ENCODE measurements at regions of chr14 and their contacts with region 1.

Region 1: DNA sequence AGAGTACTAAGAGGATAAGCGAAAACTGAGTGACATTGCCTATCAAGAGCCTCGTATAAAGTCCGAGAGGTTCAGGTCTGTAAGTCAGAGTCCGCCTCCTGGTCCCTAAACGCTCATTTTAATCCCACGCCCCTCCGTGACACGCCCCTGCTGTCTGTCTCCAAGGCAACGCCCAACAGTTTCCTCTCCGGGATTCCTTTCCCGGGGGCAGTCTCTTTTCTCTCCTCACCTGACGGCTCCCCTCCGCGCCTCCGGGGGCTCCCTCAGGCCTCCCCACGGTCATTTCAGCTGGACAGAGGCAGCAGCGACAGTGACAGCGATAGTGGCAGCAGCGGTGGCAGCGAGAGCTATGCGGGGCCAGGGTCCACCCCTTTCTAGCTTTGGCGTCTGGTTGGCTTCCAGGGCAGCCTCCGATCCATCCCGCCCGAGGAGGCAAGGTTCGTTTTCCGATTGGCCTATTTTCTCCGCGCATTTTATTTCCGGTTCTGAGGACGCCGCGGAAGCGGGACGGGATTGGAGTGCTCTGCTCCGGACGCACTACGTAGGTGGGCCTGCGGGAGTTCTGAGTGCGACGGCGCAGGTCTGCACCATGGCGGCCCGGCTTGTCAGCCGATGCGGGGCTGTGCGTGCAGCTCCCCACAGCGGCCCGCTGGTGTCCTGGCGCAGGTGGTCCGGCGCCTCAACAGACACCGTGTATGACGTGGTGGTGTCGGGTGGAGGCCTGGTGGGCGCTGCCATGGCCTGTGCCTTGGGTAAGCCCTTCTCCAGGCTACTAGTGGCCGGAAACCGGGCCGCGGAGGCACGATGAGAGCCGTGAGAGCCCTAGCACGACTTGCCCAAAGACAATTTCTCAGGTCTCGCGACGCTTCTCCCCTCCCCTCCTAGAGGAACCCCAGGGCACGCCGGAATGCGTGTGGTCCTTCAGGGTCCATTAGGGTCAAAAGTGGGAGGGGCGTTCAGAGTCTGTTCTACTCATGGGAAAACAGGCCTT is at the starts of genes COQ6 and FAM161B:
- DNase-seq: peak; percentile 98
- H3K4me3 ChIP-seq: peak within 1 kb of the TSS; percentile 55 to 70 (median 64)
- H3K27ac ChIP-seq: peak within 1 kb of the TSS; percentile 46
- H3K4me1 ChIP-seq: peaks cover 5% of the 10 kb centered on the region
- H3K27me3 ChIP-seq: no peaks in the 10 kb centered on the region
- CTCF ChIP-seq: peak in 1 of 2 donors; percentile 7
- POLR2A ChIP-seq: peak; percentile 73
- total RNA-seq, gene COQ6: 20.3 and 20.7 TPM in 2 replicates
- total RNA-seq, gene FAM161B: 3.1 and 3.3 TPM in 2 replicates

Region 2: GRCh38 chr14:73886449-73887317 is 63.4 kb before region 1 on chr14 and contains the start of gene ZNF410:
- CTCF ChIA-PET with region 1: no interaction called
- POLR2A ChIA-PET with region 1: interaction called, 3 read pairs
- dilution Hi-C with region 1: no loop called
- intact Hi-C with region 1: loop called (anchors 1 kb)
- DNase-seq: peak; percentile 93
- H3K4me3 ChIP-seq: peak within 1 kb of the TSS; percentile 60 to 87 (median 73)
- H3K27ac ChIP-seq: peak within 1 kb of the TSS; percentile 90
- H3K4me1 ChIP-seq: peaks cover 18% of the 10 kb centered on the region
- H3K27me3 ChIP-seq: no peaks in the 10 kb centered on the region
- CTCF ChIP-seq: no peak
- POLR2A ChIP-seq: peak; percentile 45
- total RNA-seq, gene ZNF410: 39.2 and 45.0 TPM in 2 replicates

Region 3: DNA sequence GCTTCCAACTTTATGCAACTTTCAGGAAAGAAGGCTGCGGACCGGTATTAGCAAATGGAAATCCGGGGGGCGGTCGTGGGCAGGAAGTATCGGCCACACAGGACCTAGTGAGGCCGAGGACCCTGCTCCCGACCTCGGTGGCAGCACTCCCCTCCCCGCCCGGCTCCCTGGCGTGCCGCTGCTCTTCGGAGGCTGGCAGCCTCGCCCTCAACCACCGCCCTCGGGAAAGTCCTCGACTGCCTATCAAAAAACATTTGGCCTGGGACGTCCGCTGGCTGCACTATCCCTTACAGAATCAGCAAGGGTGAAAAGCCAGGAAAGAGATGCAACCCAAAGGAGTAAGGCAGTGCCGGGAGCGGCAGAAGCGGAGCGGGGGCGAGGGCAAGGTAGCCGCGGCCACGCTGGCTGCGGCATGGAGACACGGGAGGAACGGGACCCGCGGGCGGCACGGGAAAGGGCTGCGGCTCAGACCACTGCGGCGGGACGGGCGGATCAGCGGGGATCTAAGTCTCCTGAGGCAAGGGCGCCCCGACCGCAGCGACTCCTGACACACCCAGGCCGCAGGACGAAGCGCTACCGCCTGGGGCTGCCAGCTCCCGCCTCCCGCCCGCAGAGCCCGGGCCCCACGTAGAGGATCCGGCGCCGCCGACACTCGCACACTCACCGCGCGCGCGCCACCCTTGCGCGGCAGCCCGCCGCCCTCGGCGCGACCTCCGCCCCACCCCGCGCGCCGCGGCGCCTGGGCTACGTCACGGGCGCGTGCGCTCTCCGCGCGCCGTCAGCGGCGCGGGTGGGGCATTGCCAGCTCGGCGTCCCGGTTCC is 68.8 kb after region 1 on chr14 and contains the starts of genes BBOF1 and ENTPD5:
- CTCF ChIA-PET with region 1: no interaction called
- POLR2A ChIA-PET with region 1: no interaction called
- dilution Hi-C with region 1: no loop called
- intact Hi-C with region 1: loop called (anchors 2 kb)
- DNase-seq: peak; percentile 83
- H3K4me3 ChIP-seq: peak within 1 kb of the TSS; percentile 76 to 97 (median 83)
- H3K27ac ChIP-seq: peak within 1 kb of the TSS; percentile 86
- H3K4me1 ChIP-seq: peaks cover 13% of the 10 kb centered on the region
- H3K27me3 ChIP-seq: no peaks in the 10 kb centered on the region
- CTCF ChIP-seq: peak in 1 of 2 donors; percentile 2
- POLR2A ChIP-seq: peak; percentile 93
- total RNA-seq, gene BBOF1: 2.2 and 2.3 TPM in 2 replicates
- total RNA-seq, gene ENTPD5: 13.0 and 14.7 TPM in 2 replicates

Region 4: GRCh38 chr14:74038015-74038859 is 88.2 kb after region 1 on chr14:
- CTCF ChIA-PET with region 1: no interaction called
- POLR2A ChIA-PET with region 1: no interaction called
- dilution Hi-C with region 1: no loop called
- intact Hi-C with region 1: loop called (anchors 5 kb)
- DNase-seq: peak; percentile 76
- H3K4me3 ChIP-seq: no peak overlapping the region
- H3K27ac ChIP-seq: no peak overlapping the region
- H3K4me1 ChIP-seq: no peaks in the 10 kb centered on the region
- H3K27me3 ChIP-seq: no peaks in the 10 kb centered on the region
- CTCF ChIP-seq: peak; percentile 39 to 42
- POLR2A ChIP-seq: no peak

Region 5: DNA sequence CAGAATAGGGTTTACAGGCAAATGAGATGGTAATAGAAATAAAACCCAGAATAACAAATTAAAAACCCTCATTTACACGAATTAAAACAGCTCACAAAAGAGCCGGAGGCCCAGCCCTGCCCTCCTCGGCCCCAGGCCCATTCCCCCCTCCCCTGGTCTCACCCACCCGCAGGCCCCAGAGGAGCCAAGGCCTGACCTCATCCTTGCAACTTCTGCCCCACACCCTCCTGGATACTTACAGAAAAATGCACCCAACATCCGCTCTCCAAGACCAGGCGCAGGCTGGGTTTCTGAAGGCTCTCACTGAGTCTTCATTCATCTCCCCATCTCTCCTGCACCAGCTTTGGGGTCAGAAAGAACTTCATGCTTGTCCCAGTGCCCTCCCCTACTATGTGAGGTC is 273.0 kb after region 1 on chr14:
- CTCF ChIA-PET with region 1: no interaction called
- POLR2A ChIA-PET with region 1: no interaction called
- dilution Hi-C with region 1: no loop called
- intact Hi-C with region 1: no loop called
- DNase-seq: no peak
- H3K4me3 ChIP-seq: no peak overlapping the region
- H3K27ac ChIP-seq: no peak overlapping the region
- H3K4me1 ChIP-seq: no peaks in the 10 kb centered on the region
- H3K27me3 ChIP-seq: peaks cover 9 to 11% of the 10 kb centered on the region in 2 experiments
- CTCF ChIP-seq: no peak
- POLR2A ChIP-seq: no peak

Measured in endothelial cell of umbilical vein (primary cell).